ENCODE measurements at regions of chr10 and their contacts with region 1.

Region 1: DNA sequence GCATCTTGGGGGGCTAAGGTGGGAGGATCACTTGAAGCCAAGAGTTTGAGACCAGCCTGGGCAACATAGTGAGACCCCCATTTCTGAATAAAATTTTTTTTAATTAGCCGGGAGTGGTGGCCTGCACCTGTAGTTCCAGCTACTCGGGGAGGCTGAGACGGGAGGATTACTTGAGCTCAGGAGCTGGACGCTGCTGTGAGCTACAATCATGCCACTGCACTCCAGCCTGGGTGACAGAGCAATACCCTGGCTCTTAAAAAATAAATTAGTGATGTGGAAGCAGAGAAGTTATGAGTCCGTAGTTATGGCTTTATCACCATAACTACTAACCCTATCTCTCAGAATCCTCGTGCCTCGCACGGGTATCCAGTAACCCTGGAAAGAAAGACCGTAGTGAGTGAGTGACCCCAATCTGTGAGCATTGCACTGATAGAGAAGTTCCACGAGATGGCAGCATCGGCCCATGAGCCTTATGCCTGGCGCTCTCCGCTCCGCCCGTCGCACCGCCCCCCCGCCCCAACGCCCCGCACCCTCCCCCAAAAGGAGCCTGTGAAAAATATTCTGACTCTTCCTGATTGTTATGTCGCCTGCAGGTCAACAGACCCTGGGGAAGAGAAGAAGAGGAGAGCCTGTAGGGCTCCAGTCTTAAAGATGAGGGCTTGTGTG is 4.9 kb upstream of the SLC29A3 start:
- DNase-seq: peak; percentile 21
- ATAC-seq: peak; percentile 70
- H3K4me3 ChIP-seq: no peak overlapping the region
- H3K27ac ChIP-seq: no peak overlapping the region
- H3K4me1 ChIP-seq: peaks cover 3 to 10% of the 10 kb centered on the region in 2 experiments; a peak in 2 of 4 replicates
- H3K27me3 ChIP-seq: no peaks in the 10 kb centered on the region
- CTCF ChIP-seq: peak; percentile 65 to 76 (median 72)
- POLR2A ChIP-seq: no peak
- RAD21 ChIP-seq: peak; percentile 85

Region 2: GRCh38 chr10:70786799-70787415 is 527.3 kb before region 1 on chr10:
- CTCF ChIA-PET with region 1: no interaction called
- POLR2A ChIA-PET with region 1: no interaction called
- RAD21 ChIA-PET with region 1: no interaction called
- intact Hi-C with region 1: no loop called
- DNase-seq: no peak
- ATAC-seq: no peak
- H3K4me3 ChIP-seq: no peak overlapping the region
- H3K27ac ChIP-seq: no peak overlapping the region
- H3K4me1 ChIP-seq: peaks cover 0 to 12% of the 10 kb centered on the region in 2 experiments; a peak in 2 of 4 replicates
- H3K27me3 ChIP-seq: no peaks in the 10 kb centered on the region
- CTCF ChIP-seq: no peak
- POLR2A ChIP-seq: no peak
- RAD21 ChIP-seq: no peak

Region 3: DNA sequence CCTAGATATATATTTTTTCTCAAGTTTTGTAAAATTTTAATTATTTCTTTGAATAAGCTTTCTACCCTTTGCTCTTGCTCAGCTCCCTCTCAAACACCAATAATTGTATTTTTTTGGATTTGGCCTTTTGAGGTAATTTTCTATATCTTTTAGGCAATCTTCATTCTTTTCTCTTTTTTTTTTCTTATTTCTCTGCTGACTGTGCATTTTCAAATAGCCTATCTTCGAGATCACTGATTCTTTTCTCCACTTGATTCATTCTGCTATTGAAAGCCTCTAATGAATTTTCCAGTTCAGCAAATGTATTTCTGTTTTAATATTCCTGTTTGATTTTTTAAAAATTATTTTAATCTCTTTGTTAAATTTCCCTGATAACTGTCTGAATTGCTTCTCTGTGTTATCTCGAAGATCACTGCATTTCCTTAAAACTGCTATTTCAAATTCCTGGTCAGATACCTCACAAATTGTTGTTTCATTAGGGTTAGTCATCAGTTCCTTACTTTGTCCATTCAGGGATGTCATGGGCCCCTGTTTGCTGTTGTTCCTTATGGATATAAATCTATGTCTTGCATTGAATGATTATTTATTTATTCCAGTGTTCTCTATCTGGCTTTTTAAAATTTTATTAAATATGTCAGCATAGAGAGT is 201.9 kb before region 1 on chr10:
- CTCF ChIA-PET with region 1: no interaction called
- POLR2A ChIA-PET with region 1: no interaction called
- RAD21 ChIA-PET with region 1: no interaction called
- intact Hi-C with region 1: no loop called
- DNase-seq: no peak
- ATAC-seq: no peak
- H3K4me3 ChIP-seq: no peak overlapping the region
- H3K27ac ChIP-seq: no peak overlapping the region
- H3K4me1 ChIP-seq: no peaks in the 10 kb centered on the region
- H3K27me3 ChIP-seq: no peaks in the 10 kb centered on the region
- CTCF ChIP-seq: no peak
- POLR2A ChIP-seq: no peak
- RAD21 ChIP-seq: no peak

Region 4: GRCh38 chr10:71708301-71708703 is 394.1 kb after region 1 on chr10:
- CTCF ChIA-PET with region 1: interaction called, 35 read pairs
- POLR2A ChIA-PET with region 1: interaction called, 4 read pairs
- RAD21 ChIA-PET with region 1: interaction called in 1 of 2 experiments, 7 read pairs
- intact Hi-C with region 1: loop called (anchors 1 kb)
- DNase-seq: no peak
- ATAC-seq: peak; percentile 87
- H3K4me3 ChIP-seq: no peak overlapping the region
- H3K27ac ChIP-seq: no peak overlapping the region
- H3K4me1 ChIP-seq: 0 out of 4 replicates have a peak, but pooled peaks cover 0 to 4% of the 10 kb centered on the region in 2 experiments
- H3K27me3 ChIP-seq: no peaks in the 10 kb centered on the region
- CTCF ChIP-seq: peak; percentile 77 to 93 (median 89)
- POLR2A ChIP-seq: no peak
- RAD21 ChIP-seq: peak; percentile 93